Transverse colon (tissue), 4 donors: ENCODE measurements at regions of chr19 and their contacts with region 1.

Region 1: DNA sequence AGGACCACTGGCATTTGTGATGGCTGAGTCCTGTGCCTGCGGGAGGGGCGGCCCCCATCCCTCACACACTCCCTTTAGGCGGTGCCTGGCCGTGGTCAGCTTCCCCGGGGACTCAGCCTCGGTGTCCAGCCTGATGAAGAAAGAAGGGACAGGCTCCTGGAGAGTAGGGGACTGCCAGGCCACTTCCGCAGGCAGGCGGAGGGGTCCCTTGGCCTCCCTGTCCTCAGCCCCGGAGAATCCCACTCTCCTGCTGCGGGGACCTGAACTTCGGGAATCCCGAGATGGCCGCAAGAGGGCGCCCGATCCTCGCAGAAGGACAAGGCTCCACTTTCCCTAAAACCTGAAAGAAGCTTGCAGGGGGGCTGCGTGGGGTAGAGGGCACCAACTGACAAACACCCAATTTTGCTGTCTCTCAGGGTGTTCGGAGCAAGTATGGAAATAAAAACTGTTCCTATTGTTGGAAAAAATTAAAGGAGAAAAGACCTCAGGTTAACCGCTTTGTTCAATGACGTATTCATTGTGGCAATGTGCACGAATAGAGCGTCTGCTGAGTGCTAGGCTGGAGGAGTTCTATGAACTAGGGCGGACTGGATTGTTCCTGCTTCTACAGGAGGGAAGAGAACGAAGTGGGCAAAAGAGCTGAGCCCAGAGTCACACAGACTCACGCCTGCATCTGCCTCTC is 297.3 kb downstream of the ZNF536 start:
- DNase-seq: peak; percentile 52
- H3K4me3 ChIP-seq: no peak overlapping the region
- H3K27ac ChIP-seq: no peak overlapping the region
- H3K4me1 ChIP-seq: peaks cover 0 to 11% (median 0%) of the 10 kb centered on the region in 4 donors
- H3K27me3 ChIP-seq: peaks cover 19% of the 10 kb centered on the region
- CTCF ChIP-seq: peak; percentile 55 to 75 (median 73)
- EP300 ChIP-seq: no peak
- POLR2A ChIP-seq: no peak

Region 2: GRCh38 chr19:30488191-30488590 is 181.3 kb before region 1 on chr19:
- in situ Hi-C with region 1: no loop called
- intact Hi-C with region 1: no loop called
- DNase-seq: no peak
- H3K4me3 ChIP-seq: no peak overlapping the region
- H3K27ac ChIP-seq: no peak overlapping the region
- H3K4me1 ChIP-seq: no peaks in the 10 kb centered on the region
- H3K27me3 ChIP-seq: no peaks in the 10 kb centered on the region
- CTCF ChIP-seq: no peak
- EP300 ChIP-seq: no peak
- POLR2A ChIP-seq: no peak

Region 3: DNA sequence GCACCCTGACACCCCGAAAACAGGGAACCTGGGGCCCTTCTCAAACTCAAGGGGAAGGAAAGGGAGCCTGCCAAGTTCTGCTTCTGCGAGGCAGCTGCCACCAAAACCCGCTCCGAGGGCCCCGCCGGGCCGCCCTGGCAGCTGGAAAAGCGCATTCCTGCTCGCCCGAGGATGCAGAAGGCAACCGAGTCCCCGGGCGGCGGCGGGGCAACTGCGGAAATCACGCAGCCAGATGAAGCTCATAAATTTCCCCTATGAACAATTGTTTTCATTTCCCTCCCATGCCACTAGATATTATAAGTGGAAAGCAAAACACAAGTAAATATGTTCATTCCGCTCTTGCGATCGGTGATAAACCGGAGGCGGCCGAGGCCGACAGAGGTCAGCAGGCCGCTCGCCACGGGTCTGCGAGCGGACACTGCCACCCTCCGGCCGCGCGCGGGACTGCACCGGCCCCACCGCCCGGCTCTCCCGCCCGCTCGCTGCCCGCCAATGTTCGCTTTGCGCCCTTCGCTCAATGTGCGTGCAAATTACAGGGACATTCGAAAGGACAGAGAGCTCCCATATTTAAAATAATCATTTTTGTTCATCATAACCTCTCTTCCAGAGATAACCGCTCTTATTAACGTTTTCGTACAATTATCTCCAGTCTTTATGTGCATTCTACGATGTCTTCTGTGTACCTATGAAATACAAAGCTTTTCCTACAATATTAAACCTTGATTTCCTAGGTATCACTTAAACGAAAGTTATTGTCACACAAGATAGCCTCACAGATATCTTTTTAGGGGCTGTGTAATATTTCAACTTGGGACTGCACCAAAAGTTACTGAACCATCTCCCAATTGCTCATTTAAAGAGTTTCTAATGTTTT is 1555.1 kb after region 1 on chr19:
- in situ Hi-C with region 1: loop called in 2 of 4 experiments (anchors 10 kb)
- intact Hi-C with region 1: no loop called
- DNase-seq: peak; percentile 56
- H3K4me3 ChIP-seq: peak overlapping the region in 1 of 4 donors; percentile 32
- H3K27ac ChIP-seq: no peak overlapping the region
- H3K4me1 ChIP-seq: peaks cover 0 to 6% (median 1%) of the 10 kb centered on the region in 4 donors
- H3K27me3 ChIP-seq: peaks cover 32% of the 10 kb centered on the region
- CTCF ChIP-seq: peak; percentile 91 to 100 (median 100)
- EP300 ChIP-seq: no peak
- POLR2A ChIP-seq: no peak